Gastrocnemius medialis (tissue), 4 donors: ENCODE measurements at regions of chr7 and their contacts with region 1.

Region 1: DNA sequence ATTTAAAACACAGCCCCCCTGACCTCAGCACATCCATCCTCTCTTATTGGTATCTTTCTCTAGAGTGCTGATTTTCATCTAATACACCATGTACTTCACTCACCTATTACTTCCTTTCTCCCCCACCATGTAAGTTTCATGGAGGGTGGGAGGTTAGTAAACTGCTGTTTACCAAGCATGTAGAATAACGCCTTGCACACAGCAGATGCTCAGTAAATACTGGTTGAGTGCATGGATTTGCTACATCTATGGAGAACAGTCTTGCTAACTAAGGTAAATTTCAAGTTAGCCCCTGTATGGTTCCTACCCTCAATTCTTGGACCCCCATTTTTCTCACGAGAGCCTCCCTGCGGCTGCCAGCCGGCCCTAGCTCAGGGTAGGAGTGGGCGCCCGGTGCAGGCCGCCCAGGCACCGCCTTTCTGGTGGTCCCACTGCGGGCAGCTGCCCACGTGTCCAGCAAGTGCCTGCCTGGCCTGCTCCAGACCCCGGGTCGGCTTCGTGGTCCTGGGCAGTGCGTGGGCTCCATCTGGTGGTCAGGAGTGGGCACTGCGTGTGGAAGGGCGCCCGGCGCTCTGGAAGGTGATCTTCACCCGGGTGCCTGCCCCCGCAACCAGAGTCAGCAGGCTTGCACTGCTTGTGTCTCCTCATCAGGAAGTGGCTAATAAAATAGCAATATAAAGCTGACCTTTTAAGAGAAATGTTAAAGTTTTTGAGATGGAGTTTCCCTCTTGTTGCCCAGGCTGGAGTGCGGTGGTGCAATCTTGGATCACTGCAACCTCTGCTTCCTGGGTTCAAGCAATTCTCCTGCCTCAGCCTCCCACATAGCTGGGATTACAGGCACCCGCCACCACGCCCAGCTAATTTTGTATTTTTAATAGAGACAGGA is 63.4 kb upstream of the DNAJB6 start:
- DNase-seq: peak; percentile 52 to 75
- ATAC-seq: peak; percentile 20 to 68
- H3K4me3 ChIP-seq: peak overlapping the region in 1 of 4 donors; percentile 30
- H3K27ac ChIP-seq: peak overlapping the region; percentile 76 to 82 (median 81)
- H3K4me1 ChIP-seq: peaks cover 21 to 22% of the 10 kb centered on the region in 2 donors
- H3K27me3 ChIP-seq: peaks cover 0 to 9% (median 7%) of the 10 kb centered on the region in 3 donors
- CTCF ChIP-seq: peak; percentile 94 to 99 (median 95)
- POLR2A ChIP-seq: no peak

Region 2: DNA sequence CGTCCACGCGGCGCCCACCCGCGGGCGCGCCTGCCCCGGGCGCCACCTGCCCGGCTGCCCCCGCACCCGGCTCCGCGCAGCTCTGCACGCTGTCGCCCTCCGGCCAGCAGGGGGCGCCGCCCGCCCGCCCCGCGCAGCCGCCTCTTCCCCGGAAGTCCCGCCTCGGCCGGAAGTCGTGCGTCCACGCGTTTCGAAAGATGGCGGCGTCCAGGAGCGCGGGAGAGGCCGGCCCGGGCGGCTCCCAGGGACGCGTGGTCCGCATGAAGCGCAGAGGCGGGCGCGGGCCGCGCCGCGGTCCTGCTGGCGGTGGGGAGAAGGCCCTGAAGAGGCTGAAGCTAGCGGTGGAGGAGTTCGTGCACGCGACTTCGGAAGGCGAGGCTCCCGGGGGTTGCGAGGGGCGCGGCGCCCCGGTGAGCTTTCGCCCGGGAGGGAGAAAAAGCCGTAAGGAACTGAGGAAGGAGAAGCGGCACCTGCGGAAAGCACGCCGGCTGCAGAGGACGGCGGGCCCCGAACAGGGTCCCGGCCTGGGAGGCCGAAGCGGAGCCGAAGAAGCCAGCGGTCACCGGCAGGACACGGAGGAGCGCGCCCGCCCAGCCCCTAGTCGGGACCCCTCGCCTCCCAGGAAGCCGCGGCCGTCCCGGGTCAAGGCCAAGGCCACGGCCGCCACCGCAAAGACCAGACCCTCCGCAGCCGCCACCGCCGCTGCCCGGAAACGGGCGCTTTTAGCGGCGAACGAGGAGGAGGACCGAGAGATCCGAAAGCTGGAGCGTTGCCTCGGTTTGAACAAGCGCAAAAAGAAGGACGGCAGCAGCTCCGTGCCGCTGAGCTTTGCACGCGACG is 323.7 kb before region 1 on chr7 and contains the start of gene NOM1:
- in situ Hi-C with region 1: loop called in 3 of 4 experiments (anchors 25 kb)
- intact Hi-C with region 1: loop called (anchors 2 kb)
- DNase-seq: peak; percentile 69 to 74
- ATAC-seq: peak; percentile 93 to 97
- H3K4me3 ChIP-seq: peak within 1 kb of the TSS; percentile 84 to 95 (median 92)
- H3K27ac ChIP-seq: peak within 1 kb of the TSS; percentile 55 to 84 (median 72)
- H3K4me1 ChIP-seq: peaks cover 25% of the 10 kb centered on the region in 2 donors
- H3K27me3 ChIP-seq: peaks cover 0 to 4% (median 4%) of the 10 kb centered on the region in 3 donors
- CTCF ChIP-seq: peak in 4 of 5 experiments; percentile 95 to 97 (median 95)
- POLR2A ChIP-seq: peak in 1 of 2 donors; percentile 49
- total RNA-seq, gene NOM1: 12.9 to 18.0 (median 14.3) TPM

Region 3: GRCh38 chr7:156969972-156970420 is 303.5 kb before region 1 on chr7:
- in situ Hi-C with region 1: loop called (anchors 10 to 25 kb)
- intact Hi-C with region 1: loop called (anchors 1 kb)
- DNase-seq: peak in 1 of 2 donors; percentile 34
- ATAC-seq: peak; percentile 30 to 66
- H3K4me3 ChIP-seq: no peak overlapping the region
- H3K27ac ChIP-seq: peak overlapping the region; percentile 3 to 76 (median 32)
- H3K4me1 ChIP-seq: peaks cover 10 to 20% of the 10 kb centered on the region in 2 donors
- H3K27me3 ChIP-seq: no peaks in the 10 kb centered on the region
- CTCF ChIP-seq: peak in 2 of 5 experiments; percentile 32 to 53
- POLR2A ChIP-seq: no peak

Region 4: GRCh38 chr7:157238087-157238486 is 35.4 kb before region 1 on chr7:
- in situ Hi-C with region 1: no loop called
- intact Hi-C with region 1: no loop called
- DNase-seq: no peak
- ATAC-seq: no peak
- H3K4me3 ChIP-seq: no peak overlapping the region
- H3K27ac ChIP-seq: no peak overlapping the region
- H3K4me1 ChIP-seq: no peaks in the 10 kb centered on the region
- H3K27me3 ChIP-seq: no peaks in the 10 kb centered on the region
- CTCF ChIP-seq: no peak
- POLR2A ChIP-seq: no peak

Region 5: GRCh38 chr7:157404845-157405481 is 131.5 kb after region 1 on chr7:
- in situ Hi-C with region 1: loop called in 1 of 4 experiments (anchors 25 kb)
- intact Hi-C with region 1: loop called (anchors 10 kb)
- DNase-seq: peak in 1 of 2 donors; percentile 59
- ATAC-seq: peak; percentile 34 to 47
- H3K4me3 ChIP-seq: no peak overlapping the region
- H3K27ac ChIP-seq: peak overlapping the region; percentile 64 to 81 (median 77)
- H3K4me1 ChIP-seq: peaks cover 23 to 37% of the 10 kb centered on the region in 2 donors
- H3K27me3 ChIP-seq: no peaks in the 10 kb centered on the region
- CTCF ChIP-seq: no peak
- POLR2A ChIP-seq: no peak